ENCODE measurements at regions of chr1 and their contacts with region 1.

Region 1: GRCh38 chr1:99786751-99787501 is 20.5 kb upstream of the FRRS1 start:
- DNase-seq: peak; percentile 51
- ATAC-seq: peak; percentile 81
- H3K4me3 ChIP-seq: peak overlapping the region; percentile 37; the same call in 1 of the 2 replicates
- H3K27ac ChIP-seq: peak overlapping the region; percentile 92
- H3K4me1 ChIP-seq: peaks cover 45% of the 10 kb centered on the region
- H3K27me3 ChIP-seq: no peaks in the 10 kb centered on the region
- CTCF ChIP-seq: no peak
- EP300 ChIP-seq: no peak
- POLR2A ChIP-seq: no peak
- RAD21 ChIP-seq: no peak

Region 2: DNA sequence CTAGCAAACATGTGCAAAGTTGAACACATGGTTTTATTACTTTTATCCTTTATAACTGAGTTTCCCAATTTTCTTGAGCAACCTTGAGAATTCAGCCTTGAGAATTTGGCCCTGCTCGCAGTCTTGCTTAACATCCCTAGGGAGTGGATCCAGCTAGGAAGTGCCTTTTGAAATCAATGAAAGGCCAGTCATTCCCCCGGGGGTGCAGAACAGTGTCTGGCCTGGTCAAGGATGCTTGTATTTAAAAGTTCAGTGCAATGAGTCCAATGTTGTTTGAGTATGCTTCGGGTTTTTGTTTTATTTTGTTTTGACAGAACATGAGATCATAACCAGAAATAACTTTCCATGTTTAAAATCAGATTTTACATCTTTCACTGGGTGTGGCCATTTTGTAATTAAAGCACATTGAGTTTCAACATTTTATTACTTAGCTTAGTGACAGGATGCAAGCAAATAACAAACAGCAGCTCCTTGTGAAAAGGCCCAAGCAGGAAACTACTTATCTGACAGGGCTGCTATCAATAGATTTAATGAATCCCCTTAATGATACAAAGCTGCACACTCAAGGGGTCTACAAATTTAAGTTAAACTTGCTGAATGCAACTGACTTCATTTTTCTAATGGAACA is 124.2 kb before region 1 on chr1:
- CTCF ChIA-PET with region 1: no interaction called
- POLR2A ChIA-PET with region 1: no interaction called
- RAD21 ChIA-PET with region 1: no interaction called
- SMC1A ChIA-PET with region 1: no interaction called
- in situ Hi-C with region 1: no loop called
- intact Hi-C with region 1: no loop called
- DNase-seq: no peak
- ATAC-seq: no peak
- H3K4me3 ChIP-seq: no peak overlapping the region
- H3K27ac ChIP-seq: no peak overlapping the region
- H3K4me1 ChIP-seq: no peaks in the 10 kb centered on the region
- H3K27me3 ChIP-seq: no peaks in the 10 kb centered on the region
- CTCF ChIP-seq: no peak
- EP300 ChIP-seq: no peak
- POLR2A ChIP-seq: no peak
- RAD21 ChIP-seq: no peak

Region 3: DNA sequence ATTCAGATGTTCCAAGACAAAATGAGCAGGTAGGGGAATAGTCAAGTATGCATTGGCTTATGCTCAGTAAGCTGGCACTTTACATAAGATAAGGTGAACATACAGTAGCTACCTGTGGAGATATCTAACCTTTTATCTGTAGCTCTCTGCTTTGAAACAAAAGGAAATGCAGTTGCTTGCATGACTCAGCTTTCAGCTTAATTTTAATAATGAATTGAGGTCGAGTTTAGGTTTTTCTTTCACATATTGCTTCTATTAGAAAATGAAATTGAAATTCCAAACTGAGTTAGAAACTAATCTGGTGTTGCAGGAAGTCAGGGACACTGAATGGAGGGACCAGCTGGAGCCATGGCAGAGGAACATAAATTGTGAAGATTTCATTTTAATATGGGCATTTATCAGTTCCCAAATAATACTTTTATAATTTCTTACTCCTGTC is 28.8 kb before region 1 on chr1:
- CTCF ChIA-PET with region 1: interaction called, 3 read pairs
- POLR2A ChIA-PET with region 1: interaction called, 6 read pairs
- RAD21 ChIA-PET with region 1: interaction called, 8 read pairs
- SMC1A ChIA-PET with region 1: interaction called, 5 read pairs
- in situ Hi-C with region 1: no loop called
- intact Hi-C with region 1: loop called (anchors 2 kb)
- DNase-seq: peak; percentile 59
- ATAC-seq: peak; percentile 71
- H3K4me3 ChIP-seq: peak overlapping the region; percentile 46; the same call in 1 of the 2 replicates
- H3K27ac ChIP-seq: peak overlapping the region; percentile 64
- H3K4me1 ChIP-seq: peaks cover 18% of the 10 kb centered on the region
- H3K27me3 ChIP-seq: no peaks in the 10 kb centered on the region
- CTCF ChIP-seq: no peak
- EP300 ChIP-seq: no peak
- POLR2A ChIP-seq: no peak
- RAD21 ChIP-seq: no peak

Region 4: DNA sequence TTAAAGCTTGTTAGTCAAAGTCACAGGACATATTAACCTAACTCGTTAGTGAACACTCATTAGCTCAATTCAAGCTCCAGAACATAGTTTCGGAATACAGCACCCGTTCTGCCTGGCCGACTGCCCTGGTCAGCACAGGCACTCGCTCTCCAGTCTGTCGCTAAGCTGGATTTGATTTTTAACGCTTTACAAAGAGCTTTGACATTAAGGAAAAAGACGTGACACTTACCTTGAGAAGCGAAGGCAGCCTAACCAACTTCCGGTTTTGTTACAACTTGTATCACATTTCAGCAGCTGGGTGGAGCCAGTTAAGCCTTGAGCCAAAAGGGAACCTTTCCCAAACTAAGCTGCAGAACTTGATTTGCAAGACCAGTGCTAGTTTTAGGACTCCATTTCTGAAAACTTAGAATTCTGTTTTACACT is 20.5 kb before region 1 on chr1 and contains the start of gene FRRS1:
- CTCF ChIA-PET with region 1: interaction called, 16 read pairs
- POLR2A ChIA-PET with region 1: interaction called, 10 read pairs
- RAD21 ChIA-PET with region 1: interaction called, 32 read pairs
- SMC1A ChIA-PET with region 1: interaction called, 54 read pairs
- in situ Hi-C with region 1: no loop called
- intact Hi-C with region 1: loop called (anchors 2 kb)
- DNase-seq: peak; percentile 85
- ATAC-seq: peak; percentile 86
- H3K4me3 ChIP-seq: peak within 1 kb of the TSS; percentile 96
- H3K27ac ChIP-seq: peak within 1 kb of the TSS; percentile 90
- H3K4me1 ChIP-seq: peaks cover under 1% of the 10 kb centered on the region; the same call in 1 of the 2 replicates
- H3K27me3 ChIP-seq: no peaks in the 10 kb centered on the region
- CTCF ChIP-seq: peak in 2 of 3 experiments; percentile 5 to 19; a peak in 2 of 6 replicates
- EP300 ChIP-seq: no peak
- POLR2A ChIP-seq: peak; percentile 58
- RAD21 ChIP-seq: peak; percentile 13; the same call in 1 of the 2 replicates
- polyA plus RNA-seq, gene FRRS1: 0.22 to 0.55 TPM

Region 5: GRCh38 chr1:99776120-99776519 is 10.8 kb before region 1 on chr1:
- CTCF ChIA-PET with region 1: interaction called, 4 read pairs
- POLR2A ChIA-PET with region 1: interaction called, 3 read pairs
- RAD21 ChIA-PET with region 1: no interaction called
- SMC1A ChIA-PET with region 1: interaction called, 13 read pairs
- in situ Hi-C with region 1: no loop called
- intact Hi-C with region 1: no loop called
- DNase-seq: no peak
- ATAC-seq: peak; percentile 91
- H3K4me3 ChIP-seq: no peak overlapping the region
- H3K27ac ChIP-seq: no peak overlapping the region
- H3K4me1 ChIP-seq: peaks cover 4% of the 10 kb centered on the region; the same call in 1 of the 2 replicates
- H3K27me3 ChIP-seq: no peaks in the 10 kb centered on the region
- CTCF ChIP-seq: no peak
- EP300 ChIP-seq: no peak
- POLR2A ChIP-seq: no peak
- RAD21 ChIP-seq: no peak

Region 6: GRCh38 chr1:99869304-99869703 is 82.4 kb after region 1 on chr1:
- CTCF ChIA-PET with region 1: no interaction called
- POLR2A ChIA-PET with region 1: no interaction called
- RAD21 ChIA-PET with region 1: no interaction called
- SMC1A ChIA-PET with region 1: no interaction called
- in situ Hi-C with region 1: no loop called
- intact Hi-C with region 1: no loop called
- DNase-seq: no peak
- ATAC-seq: no peak
- H3K4me3 ChIP-seq: no peak overlapping the region
- H3K27ac ChIP-seq: no peak overlapping the region
- H3K4me1 ChIP-seq: no peaks in the 10 kb centered on the region
- H3K27me3 ChIP-seq: no peaks in the 10 kb centered on the region
- CTCF ChIP-seq: no peak
- EP300 ChIP-seq: no peak
- POLR2A ChIP-seq: no peak
- RAD21 ChIP-seq: no peak

Measured in GM12878 (cell line).